ENCODE measurements at regions of chr6 and their contacts with region 1.

Region 1: DNA sequence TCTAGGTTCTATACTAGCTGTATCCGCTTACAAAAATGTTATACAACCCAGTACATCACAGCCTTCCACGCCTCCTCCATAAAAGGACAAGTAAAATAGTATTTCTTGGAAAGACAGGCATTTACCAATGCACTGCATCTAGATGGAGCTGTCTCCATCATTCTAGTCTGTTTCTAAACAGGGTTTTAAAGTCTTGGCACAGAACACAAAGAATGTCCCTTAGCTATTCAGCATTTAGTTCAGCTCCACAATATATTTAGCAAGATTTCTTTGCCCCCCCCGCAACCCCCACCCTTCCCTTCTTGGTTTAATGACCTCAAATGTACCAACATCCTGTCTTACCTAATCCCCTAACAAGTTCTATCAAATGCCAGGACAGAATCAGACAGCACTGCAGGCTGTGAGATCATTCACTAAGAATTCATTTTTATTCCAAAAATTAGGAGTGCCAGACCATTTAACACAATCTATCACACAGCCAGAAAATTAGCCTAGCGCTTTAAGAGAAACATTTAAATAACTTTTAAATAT is 198.6 kb downstream of the BACH2 start:
- DNase-seq: no peak

Region 2: GRCh38 chr6:89963391-89963790 is 134.7 kb before region 1 on chr6:
- intact Hi-C with region 1: no loop called
- DNase-seq: no peak

Region 3: GRCh38 chr6:90393232-90393884 is 295.3 kb after region 1 on chr6:
- intact Hi-C with region 1: loop called (anchors 5 kb)
- DNase-seq: peak in 4 of 10 donors; percentile 45 to 90 (median 62)